SK-N-SH (cell line): ENCODE measurements at regions of chr2 and their contacts with region 1.

Region 1: GRCh38 chr2:101341901-101342624 is 33.6 kb upstream of the RNF149 start:
- DNase-seq: peak; percentile 74
- H3K4me3 ChIP-seq: peak overlapping the region in 1 of 2 experiments; percentile 28; a peak in 1 of 4 replicates
- H3K27ac ChIP-seq: no peak overlapping the region
- H3K4me1 ChIP-seq: no peaks in the 10 kb centered on the region
- H3K27me3 ChIP-seq: no peaks in the 10 kb centered on the region
- CTCF ChIP-seq: peak; percentile 79
- EP300 ChIP-seq: no peak
- RAD21 ChIP-seq: peak; percentile 77

Region 2: DNA sequence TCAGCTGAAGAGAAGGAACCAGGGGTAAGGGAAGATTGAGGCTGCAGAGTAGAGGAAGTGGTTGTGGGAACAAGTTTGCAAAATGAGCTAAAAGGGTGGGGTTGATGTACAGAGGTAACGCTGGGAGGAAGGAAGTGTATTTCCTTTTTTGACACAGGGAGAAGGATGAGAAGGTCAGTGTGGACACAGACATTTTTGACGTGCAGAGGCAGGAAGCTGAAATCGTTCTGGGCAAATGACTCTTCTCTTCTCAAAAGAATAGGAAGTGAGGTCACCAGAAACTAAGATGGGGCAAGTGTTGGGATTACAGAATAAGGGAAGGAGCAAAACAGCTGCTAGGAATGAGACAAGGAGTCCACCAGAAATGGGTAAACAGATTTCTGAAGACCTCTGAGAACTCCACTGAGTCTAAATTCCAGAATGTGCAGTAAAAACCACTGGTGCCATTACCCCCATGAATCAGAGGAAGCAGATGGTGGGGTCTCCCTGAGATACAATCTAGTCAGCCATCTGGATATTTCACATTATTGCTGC is 13.5 kb before region 1 on chr2:
- CTCF ChIA-PET with region 1: interaction called, 40 read pairs
- POLR2A ChIA-PET with region 1: interaction called, 3 read pairs
- DNase-seq: no peak
- H3K4me3 ChIP-seq: no peak overlapping the region
- H3K27ac ChIP-seq: 0 out of 4 replicates have a peak overlapping the region, but pooled peaks of 1 of the 2 experiments have one; percentile 17
- H3K4me1 ChIP-seq: no peaks in the 10 kb centered on the region; a peak in 1 of 4 replicates
- H3K27me3 ChIP-seq: no peaks in the 10 kb centered on the region
- CTCF ChIP-seq: no peak
- EP300 ChIP-seq: 0 out of 4 replicates have a peak, but pooled peaks of 1 of the 2 experiments have one; percentile 9
- RAD21 ChIP-seq: no peak

Region 3: DNA sequence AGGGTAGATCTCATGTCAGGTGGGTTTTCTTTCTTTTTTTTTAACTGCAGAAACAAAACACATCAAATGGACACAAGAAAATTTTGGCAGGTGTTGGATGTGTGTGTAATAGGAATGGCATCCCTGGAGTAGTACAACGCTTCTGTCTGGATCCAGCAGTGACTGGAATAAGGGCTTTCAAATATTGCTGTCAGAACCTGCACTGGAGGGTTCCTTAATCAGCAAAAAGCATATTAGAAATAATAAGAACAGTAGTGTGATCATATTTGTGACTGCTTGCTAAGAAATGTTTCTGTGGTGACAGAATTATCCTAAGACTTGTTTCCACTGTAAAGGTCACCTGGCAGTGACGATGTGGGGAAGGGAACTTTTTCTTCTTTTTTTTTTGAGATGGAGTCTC is 14.5 kb after region 1 on chr2:
- CTCF ChIA-PET with region 1: interaction called, 14 read pairs
- POLR2A ChIA-PET with region 1: no interaction called
- DNase-seq: no peak
- H3K4me3 ChIP-seq: no peak overlapping the region
- H3K27ac ChIP-seq: no peak overlapping the region
- H3K4me1 ChIP-seq: no peaks in the 10 kb centered on the region; a peak in 1 of 4 replicates
- H3K27me3 ChIP-seq: no peaks in the 10 kb centered on the region
- CTCF ChIP-seq: no peak
- EP300 ChIP-seq: no peak
- RAD21 ChIP-seq: no peak

Region 4: GRCh38 chr2:101362316-101362715 is 20.3 kb after region 1 on chr2:
- CTCF ChIA-PET with region 1: interaction called, 12 read pairs
- POLR2A ChIA-PET with region 1: no interaction called
- DNase-seq: no peak
- H3K4me3 ChIP-seq: no peak overlapping the region
- H3K27ac ChIP-seq: no peak overlapping the region
- H3K4me1 ChIP-seq: no peaks in the 10 kb centered on the region; a peak in 1 of 4 replicates
- H3K27me3 ChIP-seq: peaks cover 11% of the 10 kb centered on the region; the same call in 1 of the 2 replicates
- CTCF ChIP-seq: no peak
- EP300 ChIP-seq: no peak
- RAD21 ChIP-seq: no peak

Region 5: GRCh38 chr2:101374821-101375562 is 32.9 kb after region 1 on chr2:
- CTCF ChIA-PET with region 1: interaction called, 10 read pairs
- POLR2A ChIA-PET with region 1: no interaction called
- DNase-seq: no peak
- H3K4me3 ChIP-seq: no peak overlapping the region
- H3K27ac ChIP-seq: no peak overlapping the region
- H3K4me1 ChIP-seq: no peaks in the 10 kb centered on the region
- H3K27me3 ChIP-seq: no peaks in the 10 kb centered on the region
- CTCF ChIP-seq: no peak
- EP300 ChIP-seq: no peak
- RAD21 ChIP-seq: no peak

Region 6: GRCh38 chr2:101387151-101387807 is 45.2 kb after region 1 on chr2 and contains the start of gene CREG2:
- CTCF ChIA-PET with region 1: interaction called, 29 read pairs
- POLR2A ChIA-PET with region 1: no interaction called
- DNase-seq: peak; percentile 93
- H3K4me3 ChIP-seq: peak within 1 kb of the TSS; percentile 61 to 66
- H3K27ac ChIP-seq: no peak within 1 kb of the TSS
- H3K4me1 ChIP-seq: peaks cover 0 to 11% of the 10 kb centered on the region in 2 experiments; a peak in 1 of 4 replicates
- H3K27me3 ChIP-seq: peaks cover 5% of the 10 kb centered on the region; the same call in 1 of the 2 replicates
- CTCF ChIP-seq: peak; percentile 62
- EP300 ChIP-seq: no peak
- RAD21 ChIP-seq: peak; percentile 33; the same call in 1 of the 2 replicates
- polyA plus RNA-seq, gene CREG2: 1.1 and 1.4 TPM in 2 replicates